ENCODE measurements at regions of chr4 and their contacts with region 1.

Region 1: GRCh38 chr4:37603070-37603468 is 83.1 kb downstream of the RELL1 start:
- DNase-seq: peak; percentile 83 to 87
- H3K4me3 ChIP-seq: no peak overlapping the region
- H3K27ac ChIP-seq: no peak overlapping the region
- H3K4me1 ChIP-seq: peaks cover 0 to 6% of the 10 kb centered on the region in 2 donors
- H3K27me3 ChIP-seq: no peaks in the 10 kb centered on the region
- CTCF ChIP-seq: peak; percentile 96 to 99 (median 98)
- POLR2A ChIP-seq: no peak

Region 2: DNA sequence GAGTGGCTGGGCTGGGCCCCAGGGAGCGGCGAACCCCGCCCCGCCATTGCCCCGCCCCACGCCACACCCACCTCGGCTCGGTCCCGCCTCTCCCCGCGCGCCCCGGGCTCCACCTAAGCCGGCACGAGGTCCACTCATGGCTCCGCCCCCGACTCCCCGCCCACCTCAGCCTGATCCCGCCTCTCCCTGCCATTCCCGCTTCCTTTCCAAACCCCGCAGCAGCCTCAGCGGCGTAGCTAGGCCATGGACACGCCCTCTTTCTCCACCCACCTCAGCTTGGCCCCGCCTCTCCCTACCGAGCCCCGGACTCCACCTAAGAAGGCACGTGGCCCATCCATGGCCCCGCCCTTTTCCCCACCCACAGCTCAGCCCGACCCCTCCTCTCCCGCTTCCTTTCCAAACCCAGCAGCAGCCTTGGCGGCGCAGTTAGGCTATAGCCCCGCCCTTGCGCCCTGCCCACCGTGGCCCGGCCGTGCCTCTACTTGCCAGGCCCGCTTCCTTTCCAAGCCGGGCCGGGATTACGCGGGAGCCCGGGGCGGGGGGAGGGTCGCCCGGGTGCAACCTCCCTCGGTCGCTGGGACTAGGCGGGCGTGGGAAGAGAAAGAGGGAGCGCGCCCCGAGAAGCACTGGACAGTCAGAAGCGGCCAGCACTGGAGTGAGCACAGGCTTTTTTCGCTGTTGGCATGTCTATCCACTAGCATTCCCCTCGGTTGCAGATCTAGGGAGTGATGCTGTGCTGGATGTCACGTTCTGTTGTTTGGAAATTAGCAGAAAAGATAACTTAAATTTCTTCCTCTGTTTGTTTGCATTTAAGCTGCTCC is 83.5 kb after region 1 on chr4 and contains the start of gene RELL1:
- intact Hi-C with region 1: loop called (anchors 10 kb)
- DNase-seq: peak; percentile 99
- H3K4me3 ChIP-seq: peak within 1 kb of the TSS; percentile 11 to 85 (median 74)
- H3K27ac ChIP-seq: peak within 1 kb of the TSS; percentile 82 to 94 (median 93)
- H3K4me1 ChIP-seq: peaks cover 20 to 33% of the 10 kb centered on the region in 2 donors
- H3K27me3 ChIP-seq: no peaks in the 10 kb centered on the region
- CTCF ChIP-seq: no peak
- POLR2A ChIP-seq: peak in 1 of 2 donors; percentile 2
- total RNA-seq, gene RELL1: 105 to 123 (median 116) TPM

Region 3: GRCh38 chr4:37737466-37737865 is 134.4 kb after region 1 on chr4:
- intact Hi-C with region 1: no loop called
- DNase-seq: no peak
- H3K4me3 ChIP-seq: no peak overlapping the region
- H3K27ac ChIP-seq: no peak overlapping the region
- H3K4me1 ChIP-seq: no peaks in the 10 kb centered on the region
- H3K27me3 ChIP-seq: no peaks in the 10 kb centered on the region
- CTCF ChIP-seq: no peak
- POLR2A ChIP-seq: no peak

Region 4: DNA sequence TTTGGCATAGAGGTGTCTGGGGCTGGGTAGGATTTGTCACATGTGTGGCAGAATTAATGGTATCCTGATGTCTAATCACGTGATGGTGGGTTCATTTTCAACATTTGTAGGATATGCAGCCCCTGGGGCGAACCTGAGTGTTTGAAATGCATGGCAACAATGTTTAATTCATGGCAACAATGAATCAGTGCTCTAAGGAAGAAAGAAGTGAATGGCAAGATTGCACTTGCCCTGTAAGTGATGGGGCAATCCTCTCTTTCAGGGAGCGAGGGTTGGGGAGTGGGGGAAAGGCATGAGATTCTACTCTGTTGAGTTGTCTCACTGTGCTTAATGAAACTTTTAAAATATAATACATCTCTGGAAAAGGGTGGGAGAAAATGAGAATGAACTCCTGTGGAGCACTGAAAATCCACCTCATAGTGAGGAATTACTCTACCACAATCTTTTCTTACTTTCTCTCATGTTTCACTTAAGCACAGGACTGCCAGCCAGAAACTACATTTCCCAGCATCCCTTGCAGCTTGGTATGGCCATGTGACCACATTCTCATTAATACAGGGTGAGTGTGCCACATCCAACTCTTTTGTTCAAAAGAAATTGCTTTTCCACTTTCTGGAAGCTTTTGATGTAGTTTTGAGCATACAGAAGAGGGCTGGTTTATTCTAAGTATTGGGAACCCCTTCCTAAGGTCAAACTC is 159.4 kb after region 1 on chr4:
- intact Hi-C with region 1: no loop called
- DNase-seq: no peak
- H3K4me3 ChIP-seq: no peak overlapping the region
- H3K27ac ChIP-seq: no peak overlapping the region
- H3K4me1 ChIP-seq: peaks cover 0 to 2% of the 10 kb centered on the region in 2 donors
- H3K27me3 ChIP-seq: no peaks in the 10 kb centered on the region
- CTCF ChIP-seq: no peak
- POLR2A ChIP-seq: no peak